ENCODE measurements at regions of chr2 and their contacts with region 1.

Region 1: GRCh38 chr2:28392297-28393113 is at the start of gene FOSL2:
- DNase-seq: peak; percentile 96 to 98
- H3K4me3 ChIP-seq: peak within 1 kb of the TSS; percentile 88
- H3K27ac ChIP-seq: peak within 1 kb of the TSS; percentile 96
- H3K4me1 ChIP-seq: peaks cover 36% of the 10 kb centered on the region
- H3K27me3 ChIP-seq: no peaks in the 10 kb centered on the region
- CTCF ChIP-seq: no peak
- total RNA-seq, gene FOSL2: 46.0 and 60.0 TPM in 2 replicates

Region 2: GRCh38 chr2:27723372-27724144 is 668.9 kb before region 1 on chr2:
- CTCF ChIA-PET with region 1: interaction called, 14 read pairs
- POLR2A ChIA-PET with region 1: interaction called, 7 read pairs
- intact Hi-C with region 1: loop called (anchors 5 kb)
- DNase-seq: peak; percentile 52 to 55
- H3K4me3 ChIP-seq: no peak overlapping the region
- H3K27ac ChIP-seq: peak overlapping the region; percentile 92
- H3K4me1 ChIP-seq: peaks cover 64% of the 10 kb centered on the region
- H3K27me3 ChIP-seq: no peaks in the 10 kb centered on the region
- CTCF ChIP-seq: peak; percentile 91

Region 3: DNA sequence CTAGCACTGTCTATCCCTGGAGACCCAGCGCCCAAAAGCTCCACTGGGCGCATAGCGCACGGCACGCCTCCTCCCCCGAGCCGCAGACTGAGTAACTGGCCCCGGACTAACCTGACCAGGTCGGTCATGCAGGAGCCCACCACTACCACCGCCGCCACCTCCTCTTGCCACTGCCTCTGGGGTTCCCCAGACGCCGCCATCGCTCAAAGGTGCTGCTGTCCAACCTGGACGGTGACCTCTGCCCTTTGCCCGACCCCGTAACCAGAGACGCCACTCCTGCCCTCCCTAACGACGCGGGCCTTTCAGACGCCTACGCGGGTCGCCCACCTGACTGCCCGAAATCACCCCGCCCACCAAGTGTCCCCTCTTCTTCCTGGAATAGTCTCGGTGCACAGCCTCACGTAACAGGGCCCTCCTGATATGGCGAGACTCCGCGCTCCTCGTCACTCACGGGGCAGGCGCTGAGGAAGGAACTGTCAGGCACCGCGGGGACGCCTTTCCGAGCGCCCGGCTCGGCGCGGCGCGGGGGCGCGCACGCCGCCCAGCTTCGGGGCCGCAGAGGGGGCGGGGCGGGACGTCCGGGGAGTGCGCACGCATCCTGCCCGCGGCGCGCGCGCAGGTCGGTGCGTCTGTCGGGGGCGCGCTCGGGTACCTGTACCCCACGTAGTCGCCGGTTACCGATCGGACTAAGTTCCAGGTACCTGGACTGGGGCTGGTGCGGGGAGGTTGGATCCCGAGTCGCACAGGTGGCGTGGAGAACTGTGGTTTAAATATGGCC is 502.2 kb before region 1 on chr2 and contains the starts of genes BABAM2 and RBKS:
- CTCF ChIA-PET with region 1: no interaction called
- POLR2A ChIA-PET with region 1: interaction called, 7 read pairs
- intact Hi-C with region 1: loop called (anchors 1 kb)
- DNase-seq: peak; percentile 75 to 91
- H3K4me3 ChIP-seq: peak within 1 kb of the TSS; percentile 81
- H3K27ac ChIP-seq: peak within 1 kb of the TSS; percentile 96
- H3K4me1 ChIP-seq: peaks cover 41% of the 10 kb centered on the region
- H3K27me3 ChIP-seq: no peaks in the 10 kb centered on the region
- CTCF ChIP-seq: no peak
- total RNA-seq, gene BABAM2: 45.9 and 46.1 TPM in 2 replicates
- total RNA-seq, gene RBKS: 4.5 and 6.8 TPM in 2 replicates

Region 4: GRCh38 chr2:28108143-28108542 is 284.4 kb before region 1 on chr2:
- CTCF ChIA-PET with region 1: no interaction called
- POLR2A ChIA-PET with region 1: interaction called, 22 read pairs
- intact Hi-C with region 1: no loop called
- DNase-seq: no peak
- H3K4me3 ChIP-seq: no peak overlapping the region
- H3K27ac ChIP-seq: no peak overlapping the region
- H3K4me1 ChIP-seq: no peaks in the 10 kb centered on the region
- H3K27me3 ChIP-seq: no peaks in the 10 kb centered on the region
- CTCF ChIP-seq: no peak

Region 5: DNA sequence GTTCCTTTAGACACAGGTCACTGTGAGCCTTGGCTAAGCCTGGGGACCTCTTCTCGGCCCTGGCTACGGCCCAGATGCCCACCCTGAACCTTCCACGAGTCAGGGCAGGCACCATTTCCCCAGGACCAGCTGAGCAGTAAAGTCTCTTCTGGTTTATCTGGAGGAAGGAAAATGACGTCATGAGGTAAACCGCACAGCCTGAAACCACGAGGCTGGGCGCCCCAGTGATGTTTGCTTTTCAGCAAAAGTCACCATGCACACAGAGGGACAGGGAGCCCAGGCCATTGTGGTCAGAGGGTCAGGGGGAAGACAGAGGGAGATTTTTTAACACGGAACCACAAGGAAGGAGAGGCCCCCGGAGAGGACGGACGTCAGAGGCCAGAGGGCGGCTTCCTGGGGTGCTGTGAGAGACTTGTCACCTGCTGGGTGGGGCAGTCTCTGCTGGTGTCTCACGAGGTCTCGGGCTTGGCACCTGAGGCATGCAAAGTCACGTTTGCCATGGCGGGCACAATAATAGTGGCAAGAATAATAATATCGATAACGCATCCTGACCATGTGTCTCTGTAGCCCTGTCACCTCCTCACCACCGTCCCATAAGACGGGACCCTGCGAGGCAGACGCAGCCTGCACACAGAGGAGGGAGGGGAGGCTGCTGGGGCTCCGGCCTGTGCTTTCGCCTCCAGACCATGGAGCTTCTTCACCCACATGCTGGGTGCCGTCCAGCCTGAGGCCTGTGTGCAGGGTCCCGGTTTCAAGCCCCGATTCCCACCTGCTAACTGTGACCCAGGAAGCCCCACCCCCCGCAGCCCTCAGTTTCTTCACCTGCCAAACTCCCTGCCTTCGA is 33.1 kb before region 1 on chr2:
- CTCF ChIA-PET with region 1: no interaction called
- POLR2A ChIA-PET with region 1: no interaction called
- intact Hi-C with region 1: loop called (anchors 2 kb)
- DNase-seq: peak; percentile 76 to 93
- H3K4me3 ChIP-seq: no peak overlapping the region
- H3K27ac ChIP-seq: peak overlapping the region; percentile 72
- H3K4me1 ChIP-seq: peaks cover 38% of the 10 kb centered on the region
- H3K27me3 ChIP-seq: no peaks in the 10 kb centered on the region
- CTCF ChIP-seq: no peak

Region 6: GRCh38 chr2:28495551-28496250 is 103.2 kb after region 1 on chr2 and contains the start of gene PLB1:
- CTCF ChIA-PET with region 1: no interaction called
- POLR2A ChIA-PET with region 1: interaction called, 10 read pairs
- intact Hi-C with region 1: no loop called
- DNase-seq: no peak
- H3K4me3 ChIP-seq: no peak within 1 kb of the TSS
- H3K27ac ChIP-seq: no peak within 1 kb of the TSS
- H3K4me1 ChIP-seq: no peaks in the 10 kb centered on the region
- H3K27me3 ChIP-seq: no peaks in the 10 kb centered on the region
- CTCF ChIP-seq: no peak
- total RNA-seq, gene PLB1: 1.7 and 2.7 TPM in 2 replicates

Region 7: GRCh38 chr2:28521663-28522062 is 129.2 kb after region 1 on chr2:
- CTCF ChIA-PET with region 1: no interaction called
- POLR2A ChIA-PET with region 1: no interaction called
- intact Hi-C with region 1: no loop called
- DNase-seq: no peak
- H3K4me3 ChIP-seq: no peak overlapping the region
- H3K27ac ChIP-seq: no peak overlapping the region
- H3K4me1 ChIP-seq: no peaks in the 10 kb centered on the region
- H3K27me3 ChIP-seq: no peaks in the 10 kb centered on the region
- CTCF ChIP-seq: no peak

Measured in PC-9 (cell line).